ENCODE measurements at regions of chr9 and their contacts with region 1.

Region 1: GRCh38 chr9:4366591-4367330 is 66.9 kb upstream of the GLIS3 start:
- DNase-seq: peak; percentile 60
- H3K4me3 Mint-ChIP-seq: no peak overlapping the region
- H3K27ac Mint-ChIP-seq: no peak overlapping the region
- H3K4me1 Mint-ChIP-seq: peaks cover 3% of the 10 kb centered on the region
- H3K27me3 Mint-ChIP-seq: no peaks in the 10 kb centered on the region

Region 2: DNA sequence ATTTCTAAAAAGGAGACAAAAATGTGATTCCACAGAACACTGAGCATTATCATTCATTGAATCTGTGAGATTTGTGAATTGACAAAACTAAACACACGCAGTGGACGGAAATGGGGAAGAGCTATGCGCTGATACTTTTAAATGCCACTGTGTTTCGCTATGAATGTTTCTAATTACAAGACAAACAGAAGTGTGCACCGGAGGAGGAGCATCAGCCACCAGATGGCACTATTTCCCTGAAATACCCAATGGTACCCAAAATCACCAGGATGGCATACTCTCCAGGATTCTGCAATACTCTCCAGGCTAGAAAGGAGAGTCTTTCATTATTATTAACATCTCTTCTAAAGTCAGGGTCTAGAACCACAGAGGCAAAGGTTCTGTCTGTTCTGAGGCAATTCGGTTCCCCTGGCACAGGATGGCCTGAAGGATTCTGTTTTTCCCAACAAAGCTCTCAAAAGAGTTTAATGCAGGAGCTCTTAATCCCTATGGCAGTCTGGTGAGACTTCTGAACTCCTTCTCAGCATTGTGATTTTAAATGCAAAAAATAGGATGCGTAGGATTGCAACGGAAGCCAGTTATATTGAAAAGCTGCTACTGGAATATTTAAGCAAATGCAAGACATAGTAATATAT is 1509.1 kb before region 1 on chr9:
- CTCF ChIA-PET with region 1: no interaction called
- intact Hi-C with region 1: loop called (anchors 5 kb)
- DNase-seq: peak; percentile 84
- H3K4me3 Mint-ChIP-seq: no peak overlapping the region
- H3K27ac Mint-ChIP-seq: no peak overlapping the region
- H3K4me1 Mint-ChIP-seq: peaks cover 6% of the 10 kb centered on the region
- H3K27me3 Mint-ChIP-seq: peaks cover 18% of the 10 kb centered on the region

Region 3: GRCh38 chr9:4048441-4048840 is 318.3 kb before region 1 on chr9:
- CTCF ChIA-PET with region 1: interaction called, 3 read pairs
- intact Hi-C with region 1: loop called (anchors 2 kb)
- DNase-seq: no peak
- H3K4me3 Mint-ChIP-seq: no peak overlapping the region
- H3K27ac Mint-ChIP-seq: no peak overlapping the region
- H3K4me1 Mint-ChIP-seq: no peaks in the 10 kb centered on the region
- H3K27me3 Mint-ChIP-seq: no peaks in the 10 kb centered on the region

Region 4: DNA sequence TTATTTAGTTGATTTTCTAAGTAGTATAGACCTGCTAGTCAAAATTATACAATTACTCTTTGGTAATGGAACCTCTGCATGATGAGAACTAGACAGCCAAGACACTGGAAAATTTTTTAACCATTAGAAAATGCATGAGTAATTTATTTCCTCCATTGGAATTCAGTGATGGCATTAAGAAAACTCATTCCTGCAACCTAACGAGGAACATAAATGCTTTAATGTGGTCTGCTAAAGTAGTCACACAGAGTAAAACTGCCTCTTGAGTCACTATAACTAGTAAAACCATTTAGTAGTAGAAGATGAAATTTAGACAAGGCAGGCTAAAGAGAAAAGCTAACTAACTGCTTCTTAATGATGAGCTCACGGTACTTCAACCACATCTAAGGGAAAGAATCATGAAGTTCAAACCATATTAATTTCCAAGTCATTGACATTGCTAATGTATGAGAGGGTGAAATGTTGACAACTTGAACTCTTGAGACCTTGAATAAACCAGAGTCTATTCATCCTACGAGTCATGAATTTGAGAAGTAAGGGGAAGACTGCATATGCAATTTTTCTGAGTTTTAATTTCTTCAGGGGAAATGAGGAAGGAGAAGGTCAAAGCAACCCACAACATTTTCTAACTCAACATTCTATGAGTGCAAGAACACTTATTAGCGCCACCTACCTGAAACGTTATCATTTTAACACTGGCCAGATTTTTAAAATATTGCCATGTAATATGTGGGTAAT is 141.3 kb before region 1 on chr9:
- CTCF ChIA-PET with region 1: no interaction called
- intact Hi-C with region 1: no loop called
- DNase-seq: no peak
- H3K4me3 Mint-ChIP-seq: no peak overlapping the region
- H3K27ac Mint-ChIP-seq: no peak overlapping the region
- H3K4me1 Mint-ChIP-seq: peaks cover 18% of the 10 kb centered on the region
- H3K27me3 Mint-ChIP-seq: no peaks in the 10 kb centered on the region

Region 5: DNA sequence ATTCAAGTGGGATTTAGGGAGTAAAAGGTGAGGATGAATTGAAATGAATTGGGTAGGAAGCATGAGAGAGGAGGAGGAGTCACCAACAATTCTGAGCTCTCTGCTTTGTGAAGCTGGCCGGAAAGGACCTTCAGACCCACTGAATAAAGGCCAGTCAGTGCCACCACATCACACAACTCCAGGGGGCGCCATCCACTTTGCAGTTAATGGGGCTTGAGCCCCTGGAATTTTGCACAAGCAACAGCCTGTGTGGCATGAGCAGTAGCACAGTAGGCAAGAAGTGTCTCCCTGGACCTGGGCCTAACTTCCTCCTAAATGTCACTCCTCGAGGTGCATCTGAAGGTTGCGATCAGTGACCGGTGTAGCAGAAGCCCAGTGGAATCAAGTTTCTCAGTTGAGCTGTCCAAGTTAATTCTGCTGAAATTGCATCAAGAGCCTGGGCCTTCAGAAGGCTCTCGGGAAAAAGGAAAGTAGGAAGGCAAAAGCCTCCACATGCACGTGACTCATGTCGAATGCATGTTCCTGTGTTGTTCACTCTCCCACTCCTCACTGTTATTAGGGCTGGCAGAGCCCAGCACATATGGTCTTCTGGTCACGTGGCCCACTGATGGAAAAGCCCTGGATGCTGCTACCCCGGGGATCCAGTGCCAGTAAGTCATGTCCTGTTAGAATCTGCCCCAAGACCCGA is 39.1 kb before region 1 on chr9:
- CTCF ChIA-PET with region 1: interaction called, 10 read pairs
- intact Hi-C with region 1: no loop called
- DNase-seq: no peak
- H3K4me3 Mint-ChIP-seq: no peak overlapping the region
- H3K27ac Mint-ChIP-seq: no peak overlapping the region
- H3K4me1 Mint-ChIP-seq: peaks cover 22% of the 10 kb centered on the region
- H3K27me3 Mint-ChIP-seq: no peaks in the 10 kb centered on the region

Region 6: GRCh38 chr9:4344946-4345345 is 21.8 kb before region 1 on chr9:
- CTCF ChIA-PET with region 1: interaction called, 28 read pairs
- intact Hi-C with region 1: loop called (anchors 1 kb)
- DNase-seq: peak; percentile 82
- H3K4me3 Mint-ChIP-seq: peak overlapping the region; percentile 28
- H3K27ac Mint-ChIP-seq: peak overlapping the region; percentile 43
- H3K4me1 Mint-ChIP-seq: peaks cover 17% of the 10 kb centered on the region
- H3K27me3 Mint-ChIP-seq: no peaks in the 10 kb centered on the region

Region 7: GRCh38 chr9:4955836-4956235 is 589.1 kb after region 1 on chr9:
- CTCF ChIA-PET with region 1: no interaction called
- intact Hi-C with region 1: no loop called
- DNase-seq: no peak
- H3K4me3 Mint-ChIP-seq: no peak overlapping the region
- H3K27ac Mint-ChIP-seq: no peak overlapping the region
- H3K4me1 Mint-ChIP-seq: peaks cover 6% of the 10 kb centered on the region
- H3K27me3 Mint-ChIP-seq: no peaks in the 10 kb centered on the region